Motor neuron (in vitro differentiated cells): ENCODE measurements at regions of chr20 and their contacts with region 1.

Region 1: GRCh38 chr20:39861381-39861780 is 827.7 kb downstream of the MAFB start:
- ATAC-seq: no peak
- H3K4me3 ChIP-seq: no peak overlapping the region
- H3K27ac ChIP-seq: no peak overlapping the region
- H3K4me1 ChIP-seq: peaks cover 6 to 7% of the 10 kb centered on the region in 2 donors

Region 2: DNA sequence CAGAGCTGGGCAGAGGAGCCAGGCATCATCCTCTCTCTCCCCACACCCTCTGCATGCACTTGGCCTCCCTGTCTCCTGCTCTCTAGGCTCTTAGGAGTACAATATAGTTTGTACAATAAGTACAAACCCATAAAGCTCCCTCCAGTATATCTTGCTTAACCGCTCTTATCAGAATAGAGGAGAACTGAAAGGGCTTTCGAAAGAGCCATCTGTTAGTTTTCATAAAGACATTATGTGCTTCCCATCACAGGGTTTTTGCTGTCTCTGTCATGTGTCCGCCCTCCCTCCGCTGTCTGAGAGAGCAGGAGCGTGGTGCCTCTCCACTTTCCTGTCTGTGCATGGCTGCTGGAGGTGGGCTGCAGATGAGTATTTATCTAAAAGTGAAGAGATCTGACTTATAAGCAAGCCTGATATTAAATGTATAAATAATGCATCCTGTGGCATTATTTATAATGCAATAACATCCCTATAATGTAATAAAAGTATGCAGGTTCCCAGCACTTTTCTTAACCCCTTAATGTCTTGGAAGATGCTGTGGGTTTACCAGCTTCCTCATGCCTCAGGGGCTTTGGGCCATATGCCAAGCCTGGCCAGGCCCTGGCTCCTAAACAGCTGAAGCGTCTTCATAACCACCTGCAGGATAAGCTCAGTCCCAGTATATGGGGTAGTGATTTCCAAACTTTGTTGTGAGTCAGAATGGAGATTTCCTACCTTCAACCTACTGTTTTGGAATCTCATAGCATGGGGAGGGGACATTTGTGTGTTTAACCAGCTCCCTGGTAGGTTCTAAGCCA is 602.2 kb before region 1 on chr20:
- in situ Hi-C with region 1: loop called in 1 of 9 experiments (anchors 10 kb)
- ATAC-seq: peak in 5 of 8 experiments; percentile 44 to 78 (median 74)
- H3K4me3 ChIP-seq: no peak overlapping the region
- H3K27ac ChIP-seq: no peak overlapping the region
- H3K4me1 ChIP-seq: peaks cover 14 to 25% of the 10 kb centered on the region in 2 donors